Right ventricle myocardium superior (tissue), 1 donor: ENCODE measurements at regions of chr6 and their contacts with region 1.

Region 1: DNA sequence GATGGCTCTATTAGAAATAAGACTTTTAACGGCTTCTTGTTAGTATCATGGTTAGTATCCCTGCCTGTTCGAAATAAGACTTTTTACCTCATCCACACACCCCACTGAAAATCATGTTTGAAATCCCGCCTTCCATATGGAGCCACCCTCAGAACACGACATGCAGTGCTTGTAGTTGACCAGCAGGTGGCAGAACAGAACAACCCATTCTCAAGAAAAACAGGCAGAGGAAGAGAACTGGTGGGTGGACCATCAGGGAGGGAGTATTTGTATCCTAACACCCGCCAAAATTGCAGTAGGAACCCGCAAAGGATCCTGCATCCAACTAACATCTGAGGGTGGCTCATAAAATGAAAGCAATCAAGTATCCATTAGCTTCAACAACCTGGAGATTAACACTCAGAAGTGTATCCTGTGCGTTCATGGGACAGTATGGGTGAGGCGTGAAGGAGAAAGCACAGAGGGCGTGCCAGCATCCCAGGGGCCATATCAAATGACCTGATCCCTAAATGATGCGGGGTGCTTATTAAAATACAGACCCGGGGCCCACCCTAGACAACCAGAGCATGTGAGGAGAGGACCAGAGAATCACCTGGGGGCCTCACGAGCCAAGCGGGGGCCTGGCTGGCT is 89.6 kb upstream of the NHSL1 start:
- DNase-seq: peak; percentile 59
- ATAC-seq: peak; percentile 73

Region 2: DNA sequence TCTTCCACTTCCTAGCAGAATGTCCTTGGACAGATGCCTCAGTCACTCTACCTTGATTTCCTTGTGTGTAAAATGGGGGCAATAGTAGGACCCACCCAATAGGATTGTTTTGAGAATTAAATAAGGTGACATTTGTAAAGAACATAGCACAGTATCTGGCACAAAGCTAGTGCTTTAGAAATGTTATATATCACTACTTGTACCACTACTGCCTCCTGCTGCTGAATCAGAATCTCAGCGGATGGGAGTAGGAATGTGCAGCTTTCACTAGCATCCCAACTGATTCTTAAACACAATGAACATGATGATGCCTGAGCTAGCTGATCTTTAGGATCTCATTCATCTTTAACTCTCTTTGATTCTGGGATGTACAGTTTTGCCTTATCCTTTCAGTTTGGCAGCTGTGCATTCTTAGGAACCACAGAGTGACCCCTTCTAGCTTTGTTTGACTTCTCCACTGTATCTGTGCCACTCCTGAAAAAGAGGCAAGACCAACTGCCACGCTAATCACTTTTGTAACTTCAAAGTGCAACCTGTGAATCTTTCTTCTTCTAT is 377.8 kb before region 1 on chr6:
- intact Hi-C with region 1: no loop called
- DNase-seq: no peak
- ATAC-seq: no peak

Region 3: GRCh38 chr6:138287144-138287955 is 301.6 kb before region 1 on chr6:
- intact Hi-C with region 1: loop called (anchors 10 kb)
- DNase-seq: no peak
- ATAC-seq: peak; percentile 55

Region 4: DNA sequence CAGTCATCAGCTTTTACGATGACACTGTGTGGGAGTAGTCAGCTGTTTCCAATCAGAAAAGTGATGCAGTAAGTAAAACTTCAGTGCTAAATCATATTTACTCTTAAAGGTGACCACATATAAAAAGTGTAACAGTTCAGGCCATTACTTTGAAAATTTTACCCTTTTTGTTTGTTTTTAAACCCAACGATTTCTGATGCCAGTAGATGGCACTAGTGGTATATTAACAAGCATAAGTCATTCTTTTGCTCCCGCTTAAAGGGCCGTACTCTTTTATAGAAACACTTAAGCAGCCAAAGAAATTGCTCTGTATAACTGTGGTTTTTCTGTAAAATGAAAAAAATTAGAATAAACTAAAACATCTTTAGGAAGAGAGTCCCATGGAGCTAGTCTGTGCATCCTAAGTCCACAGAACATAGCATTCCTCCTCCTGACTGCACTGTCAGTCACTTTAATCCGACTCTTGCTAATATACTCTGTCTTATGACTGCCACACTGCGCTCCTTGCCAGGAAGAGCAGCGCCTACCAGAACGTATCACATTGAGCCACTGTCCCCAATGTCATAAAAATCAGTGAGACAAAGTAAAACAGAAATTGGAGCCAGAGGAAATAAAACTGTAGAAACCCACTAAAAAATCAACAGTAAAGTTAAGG is 159.8 kb before region 1 on chr6:
- intact Hi-C with region 1: loop called (anchors 2 kb)
- DNase-seq: no peak
- ATAC-seq: peak; percentile 56

Region 5: DNA sequence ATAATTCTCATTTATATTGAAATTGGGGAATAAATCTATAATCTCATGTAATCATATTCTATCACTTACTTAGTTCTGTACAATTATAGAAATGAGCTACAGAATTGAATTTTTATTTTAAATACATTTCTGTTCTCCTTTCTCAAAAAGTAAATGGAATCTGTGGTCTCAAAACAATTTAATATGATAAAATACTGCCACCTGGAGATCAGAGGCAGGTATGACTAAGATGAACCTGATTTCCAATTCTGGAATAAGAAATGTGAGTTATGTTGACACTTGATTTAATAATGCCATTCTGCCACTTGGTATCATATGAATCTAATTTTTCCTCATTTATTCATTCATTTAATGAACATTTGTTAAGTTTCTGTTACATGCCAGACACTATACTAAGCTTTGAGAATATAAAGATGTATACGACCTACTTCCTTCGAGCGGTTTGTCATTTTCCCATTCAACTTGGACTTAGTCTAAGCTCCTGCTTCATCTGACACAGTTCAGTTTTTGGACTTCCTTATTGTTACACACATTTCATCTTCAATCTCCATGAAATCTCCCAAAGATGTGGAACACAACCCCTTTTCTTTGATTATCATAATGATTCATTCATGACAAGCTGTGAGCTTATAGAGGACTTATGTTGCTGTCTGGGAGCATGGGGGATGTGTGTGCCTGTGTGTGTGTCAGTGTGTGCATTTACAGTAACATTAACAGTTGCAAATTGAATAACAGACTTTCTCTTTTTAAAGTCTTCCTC is 177.2 kb after region 1 on chr6:
- intact Hi-C with region 1: loop called (anchors 2 kb)
- DNase-seq: no peak
- ATAC-seq: peak; percentile 48